ENCODE measurements at regions of chr5 and their contacts with region 1.

Region 1: GRCh38 chr5:102681407-102681983 is 73.6 kb upstream of the PAM start:
- DNase-seq: peak; percentile 68
- H3K4me3 ChIP-seq: no peak overlapping the region
- H3K27ac ChIP-seq: no peak overlapping the region
- H3K4me1 ChIP-seq: no peaks in the 10 kb centered on the region
- H3K27me3 ChIP-seq: no peaks in the 10 kb centered on the region
- CTCF ChIP-seq: peak; percentile 87 to 92

Region 2: DNA sequence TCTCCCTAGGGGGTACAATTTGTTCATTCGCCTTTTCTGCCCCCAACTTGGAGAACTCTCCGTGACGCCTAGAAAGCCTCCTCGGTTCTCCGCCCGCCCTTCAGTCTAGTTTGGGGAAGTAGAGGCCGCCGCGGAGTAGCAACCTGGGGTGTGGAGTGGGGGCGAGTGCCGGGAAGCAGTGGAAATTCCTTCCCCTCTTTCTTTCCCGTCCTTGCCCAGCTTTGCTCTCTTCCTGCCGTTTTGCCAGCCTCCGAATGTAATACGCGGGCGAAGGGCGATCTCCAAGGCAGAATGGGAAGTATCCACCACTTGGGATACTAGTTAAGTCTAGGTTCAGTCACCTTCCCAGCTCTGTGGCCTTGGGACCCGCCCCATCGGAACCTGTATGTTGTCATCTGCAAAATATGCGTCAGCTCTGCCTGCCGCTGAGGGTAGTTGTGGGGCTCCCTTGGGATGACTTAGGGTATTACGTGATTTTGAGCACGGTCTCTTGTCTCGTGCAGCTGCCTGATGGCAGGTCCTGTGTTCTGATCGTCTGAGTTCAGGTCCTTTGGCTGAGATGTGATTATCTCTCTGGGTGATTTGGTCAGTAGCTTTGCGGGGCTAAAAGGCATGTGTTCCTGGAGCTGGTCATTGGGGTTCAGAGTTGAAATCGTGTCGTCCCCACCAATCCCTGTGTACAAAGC is 74.3 kb after region 1 on chr5:
- CTCF ChIA-PET with region 1: interaction called, 5 read pairs
- dilution Hi-C with region 1: no loop called
- in situ Hi-C with region 1: no loop called
- intact Hi-C with region 1: loop called (anchors 2 kb)
- DNase-seq: peak; percentile 89
- H3K4me3 ChIP-seq: peak overlapping the region; percentile 79 to 88 (median 85)
- H3K27ac ChIP-seq: peak overlapping the region; percentile 92
- H3K4me1 ChIP-seq: peaks cover 27% of the 10 kb centered on the region
- H3K27me3 ChIP-seq: no peaks in the 10 kb centered on the region
- CTCF ChIP-seq: peak in 1 of 2 donors; percentile 16

Region 3: GRCh38 chr5:102792705-102793104 is 111.2 kb after region 1 on chr5:
- CTCF ChIA-PET with region 1: interaction called, 4 read pairs
- dilution Hi-C with region 1: no loop called
- in situ Hi-C with region 1: loop called in 1 of 2 experiments (anchors 25 kb)
- intact Hi-C with region 1: no loop called
- DNase-seq: no peak
- H3K4me3 ChIP-seq: no peak overlapping the region
- H3K27ac ChIP-seq: no peak overlapping the region
- H3K4me1 ChIP-seq: peaks cover 3% of the 10 kb centered on the region
- H3K27me3 ChIP-seq: no peaks in the 10 kb centered on the region
- CTCF ChIP-seq: peak; percentile 37 to 42

Region 4: DNA sequence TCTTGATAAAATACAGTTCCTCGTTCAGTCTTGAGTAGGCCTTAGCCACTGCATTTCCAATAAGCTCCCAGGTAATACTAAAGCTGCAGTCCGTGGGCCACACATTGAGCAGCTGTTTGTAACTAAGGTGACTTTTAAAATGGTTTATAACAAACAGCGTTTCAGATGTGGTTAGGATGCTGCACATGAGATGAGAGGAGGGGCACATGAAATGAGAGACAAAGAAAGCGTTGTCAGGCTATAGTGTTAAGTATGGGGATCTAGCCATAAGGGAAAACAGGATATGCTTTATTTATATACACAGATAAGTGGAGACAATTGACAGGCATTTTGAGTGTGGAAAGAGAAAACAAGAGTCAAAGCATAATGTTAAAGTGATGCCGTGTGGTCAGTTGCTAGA is 163.5 kb after region 1 on chr5:
- CTCF ChIA-PET with region 1: no interaction called
- dilution Hi-C with region 1: no loop called
- in situ Hi-C with region 1: no loop called
- intact Hi-C with region 1: no loop called
- DNase-seq: no peak
- H3K4me3 ChIP-seq: no peak overlapping the region
- H3K27ac ChIP-seq: no peak overlapping the region
- H3K4me1 ChIP-seq: no peaks in the 10 kb centered on the region
- H3K27me3 ChIP-seq: no peaks in the 10 kb centered on the region
- CTCF ChIP-seq: no peak

Region 5: GRCh38 chr5:102971697-102972293 is 290.3 kb after region 1 on chr5:
- CTCF ChIA-PET with region 1: no interaction called
- dilution Hi-C with region 1: no loop called
- in situ Hi-C with region 1: no loop called
- intact Hi-C with region 1: loop called (anchors 1 kb)
- DNase-seq: peak; percentile 9
- H3K4me3 ChIP-seq: no peak overlapping the region
- H3K27ac ChIP-seq: no peak overlapping the region
- H3K4me1 ChIP-seq: no peaks in the 10 kb centered on the region
- H3K27me3 ChIP-seq: no peaks in the 10 kb centered on the region
- CTCF ChIP-seq: peak; percentile 31 to 53

Region 6: DNA sequence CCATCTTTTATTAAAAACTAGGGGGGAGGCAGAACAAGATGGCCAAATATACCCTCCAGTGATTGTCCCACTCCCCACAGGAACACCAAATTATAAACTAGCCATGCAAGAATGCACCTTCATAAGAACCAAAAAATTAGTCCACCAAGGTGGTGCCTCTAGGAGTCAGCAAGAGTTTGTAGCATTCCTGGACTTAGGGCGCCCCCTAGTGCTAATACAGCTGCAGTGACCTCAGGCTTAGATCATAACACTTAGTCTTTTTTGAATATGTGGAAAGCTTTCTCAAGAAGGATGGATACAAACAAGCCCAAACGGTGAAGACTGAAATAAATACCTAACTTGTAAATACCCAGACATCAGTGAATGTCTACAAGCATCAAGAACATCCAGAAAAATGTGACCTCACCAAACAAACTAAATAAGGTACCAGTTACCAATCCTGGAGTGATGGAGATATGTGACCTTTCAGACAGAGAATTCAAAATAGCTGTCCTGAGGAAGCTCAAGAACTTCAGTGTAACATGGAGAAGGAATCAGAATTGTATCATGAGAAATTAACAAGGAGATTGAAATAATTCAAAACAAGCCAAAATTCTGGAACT is 457.9 kb after region 1 on chr5:
- CTCF ChIA-PET with region 1: no interaction called
- dilution Hi-C with region 1: no loop called
- in situ Hi-C with region 1: no loop called
- intact Hi-C with region 1: loop called (anchors 5 kb)
- DNase-seq: peak; percentile 50
- H3K4me3 ChIP-seq: no peak overlapping the region
- H3K27ac ChIP-seq: no peak overlapping the region
- H3K4me1 ChIP-seq: no peaks in the 10 kb centered on the region
- H3K27me3 ChIP-seq: no peaks in the 10 kb centered on the region
- CTCF ChIP-seq: peak; percentile 89 to 93

Measured in mammary epithelial cell (primary cell).